ENCODE measurements at regions of chr10 and their contacts with region 1.

Region 1: DNA sequence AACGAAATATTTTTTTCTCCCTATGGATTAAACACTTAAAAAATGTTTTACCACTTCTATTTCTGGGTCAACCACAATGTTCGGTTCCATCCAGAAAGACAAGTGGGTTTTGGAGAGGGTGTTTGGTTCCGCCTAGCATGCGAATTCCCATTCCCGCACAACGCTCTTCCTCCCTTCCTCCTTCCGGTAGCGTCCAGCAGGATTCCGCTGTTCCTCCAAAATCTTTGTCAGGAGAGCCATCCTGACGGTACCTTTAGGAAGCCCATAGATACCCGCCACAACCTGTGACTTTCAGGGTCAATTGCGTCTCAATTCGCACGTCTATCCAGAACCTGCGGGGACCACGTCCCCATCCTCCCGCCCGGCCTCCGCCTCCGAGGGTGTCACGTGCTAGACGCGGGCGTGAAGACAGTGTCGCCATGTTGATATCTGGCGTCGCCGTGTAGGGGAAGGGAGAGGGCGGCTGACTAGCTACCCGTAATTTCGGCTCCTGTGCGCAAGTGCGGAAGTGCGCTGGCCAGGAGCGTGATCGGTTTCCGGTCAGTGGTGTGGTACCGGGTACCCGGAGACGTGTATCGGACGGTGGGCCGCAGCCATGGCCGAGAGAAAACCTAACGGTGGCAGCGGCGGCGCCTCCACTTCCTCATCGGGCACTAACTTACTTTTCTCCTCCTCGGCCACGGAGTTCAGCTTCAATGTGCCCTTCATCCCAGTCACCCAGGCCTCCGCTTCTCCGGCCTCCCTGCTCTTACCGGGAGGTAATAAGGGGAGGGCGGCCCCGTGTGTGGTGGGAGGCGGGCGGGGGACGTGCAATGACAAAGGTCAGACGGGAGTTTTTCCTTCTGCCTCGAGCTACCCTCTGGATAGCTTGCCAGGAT is at the start of gene SEC23IP:
- DNase-seq: peak; percentile 94
- H3K4me3 ChIP-seq: peak within 1 kb of the TSS; percentile 89
- H3K27ac ChIP-seq: peak within 1 kb of the TSS; percentile 37
- H3K4me1 ChIP-seq: peaks cover 18% of the 10 kb centered on the region
- CTCF ChIP-seq: no peak
- total RNA-seq, gene SEC23IP: 19.9 and 21.4 TPM in 2 replicates

Region 2: GRCh38 chr10:119872860-119873681 is 19.4 kb before region 1 on chr10:
- CTCF ChIA-PET with region 1: no interaction called
- POLR2A ChIA-PET with region 1: interaction called, 39 read pairs
- intact Hi-C with region 1: loop called (anchors 1 kb)
- DNase-seq: peak; percentile 91
- H3K4me3 ChIP-seq: peak overlapping the region; percentile 87
- H3K27ac ChIP-seq: peak overlapping the region; percentile 61
- H3K4me1 ChIP-seq: peaks cover 25% of the 10 kb centered on the region
- CTCF ChIP-seq: no peak

Measured in OCI-LY7 (cell line).